ENCODE measurements at regions of chr10 and their contacts with region 1.

Region 1: GRCh38 chr10:90912174-90912573 is 8.7 kb downstream of the ANKRD1 start:
- DNase-seq: no peak
- ATAC-seq: no peak
- H3K4me3 Mint-ChIP-seq: no peak overlapping the region
- H3K27ac Mint-ChIP-seq: no peak overlapping the region
- H3K4me1 Mint-ChIP-seq: peaks cover 9% of the 10 kb centered on the region
- H3K27me3 Mint-ChIP-seq: peaks cover 80% of the 10 kb centered on the region
- CTCF ChIP-seq: no peak

Region 2: GRCh38 chr10:90885176-90885575 is 27.0 kb before region 1 on chr10:
- CTCF ChIA-PET with region 1: interaction called, 10 read pairs
- POLR2A ChIA-PET with region 1: no interaction called
- DNase-seq: no peak
- ATAC-seq: no peak
- H3K4me3 Mint-ChIP-seq: no peak overlapping the region
- H3K27ac Mint-ChIP-seq: no peak overlapping the region
- H3K4me1 Mint-ChIP-seq: no peaks in the 10 kb centered on the region
- H3K27me3 Mint-ChIP-seq: no peaks in the 10 kb centered on the region
- CTCF ChIP-seq: no peak

Region 3: GRCh38 chr10:90930070-90930837 is 18.1 kb after region 1 on chr10:
- CTCF ChIA-PET with region 1: interaction called, 16 read pairs
- POLR2A ChIA-PET with region 1: no interaction called
- DNase-seq: no peak
- ATAC-seq: peak; percentile 79
- H3K4me3 Mint-ChIP-seq: peak overlapping the region; percentile 46
- H3K27ac Mint-ChIP-seq: no peak overlapping the region; the same call in 1 of the 2 replicates
- H3K4me1 Mint-ChIP-seq: peaks cover 36% of the 10 kb centered on the region
- H3K27me3 Mint-ChIP-seq: peaks cover 100% of the 10 kb centered on the region
- CTCF ChIP-seq: no peak

Region 4: DNA sequence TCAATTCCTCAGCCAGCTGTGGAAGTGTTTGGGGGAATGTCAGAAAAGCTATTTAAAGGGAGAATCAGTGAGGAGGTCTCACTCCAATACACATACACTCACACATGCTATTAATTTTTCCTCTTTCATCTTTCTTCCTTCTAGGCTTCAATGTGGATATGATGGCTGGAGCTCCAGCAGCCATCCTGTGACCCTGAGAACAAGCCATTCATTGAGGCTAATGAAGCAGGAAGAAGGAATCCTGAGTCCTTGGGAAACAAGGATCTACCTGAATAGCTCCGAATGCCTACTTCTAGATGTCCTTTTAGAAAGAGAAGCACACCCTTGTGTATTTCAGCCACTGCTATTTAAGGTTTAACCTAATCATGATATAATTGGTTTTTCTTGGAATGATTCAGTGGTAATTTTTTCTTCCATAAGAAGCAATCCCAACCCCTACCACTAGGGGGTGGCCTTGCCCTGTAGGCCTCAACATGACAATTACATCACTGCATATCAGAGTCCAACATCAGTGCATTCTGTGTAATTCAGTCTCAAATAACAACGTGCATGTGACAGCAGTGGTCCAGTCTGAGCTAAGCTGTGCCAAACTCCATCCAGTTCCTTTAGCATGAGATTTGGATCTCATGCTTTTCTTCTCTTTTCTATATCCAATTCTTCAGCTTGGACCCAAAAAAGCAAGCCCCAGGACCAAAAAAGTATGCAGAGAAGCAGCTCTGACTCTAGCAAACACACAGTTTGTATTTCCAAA is 94.0 kb after region 1 on chr10:
- CTCF ChIA-PET with region 1: interaction called, 13 read pairs
- POLR2A ChIA-PET with region 1: no interaction called
- DNase-seq: peak; percentile 43
- ATAC-seq: no peak; the same call in 1 of the 2 replicates
- H3K4me3 Mint-ChIP-seq: no peak overlapping the region
- H3K27ac Mint-ChIP-seq: no peak overlapping the region
- H3K4me1 Mint-ChIP-seq: no peaks in the 10 kb centered on the region
- H3K27me3 Mint-ChIP-seq: peaks cover 23% of the 10 kb centered on the region
- CTCF ChIP-seq: peak; percentile 90

Region 5: DNA sequence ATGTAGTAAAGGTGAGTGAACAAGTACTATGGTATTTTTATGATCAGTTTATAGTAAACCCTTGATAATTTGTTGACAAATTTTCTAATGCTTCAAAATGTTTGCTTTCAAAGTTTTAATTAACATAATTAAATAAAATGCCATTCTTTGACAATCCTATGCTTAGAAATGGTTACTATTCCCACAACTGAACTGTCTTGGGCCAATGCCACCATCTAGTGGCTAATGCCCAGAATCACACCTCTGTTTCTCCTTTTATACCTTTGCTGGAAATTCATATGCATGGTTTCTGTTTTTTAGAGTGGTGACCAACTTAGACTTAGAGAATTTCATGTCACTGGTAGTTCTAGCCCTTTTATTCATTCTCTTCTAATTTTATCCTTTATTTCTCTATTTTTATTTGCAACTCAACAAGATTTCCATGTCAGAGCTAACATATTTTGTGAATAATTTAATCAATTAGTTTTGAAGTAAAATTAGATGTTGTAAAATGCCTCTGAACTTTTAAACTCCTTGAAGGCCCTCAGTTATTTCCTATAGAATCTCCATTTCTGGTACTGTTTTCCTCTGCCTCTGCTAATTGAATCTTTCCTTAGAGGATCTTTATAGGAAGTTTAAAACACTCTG is 339.4 kb after region 1 on chr10:
- CTCF ChIA-PET with region 1: interaction called, 19 read pairs
- POLR2A ChIA-PET with region 1: no interaction called
- DNase-seq: peak; percentile 22
- ATAC-seq: peak; percentile 58; the same call in 1 of the 2 replicates
- H3K4me3 Mint-ChIP-seq: no peak overlapping the region
- H3K27ac Mint-ChIP-seq: no peak overlapping the region
- H3K4me1 Mint-ChIP-seq: peaks cover 3% of the 10 kb centered on the region; the same call in 1 of the 2 replicates
- H3K27me3 Mint-ChIP-seq: no peaks in the 10 kb centered on the region; the same call in none of the 2 replicates
- CTCF ChIP-seq: peak; percentile 78

Measured in WTC11 (cell line).